ENCODE measurements at regions of chr19 and their contacts with region 1.

Region 1: DNA sequence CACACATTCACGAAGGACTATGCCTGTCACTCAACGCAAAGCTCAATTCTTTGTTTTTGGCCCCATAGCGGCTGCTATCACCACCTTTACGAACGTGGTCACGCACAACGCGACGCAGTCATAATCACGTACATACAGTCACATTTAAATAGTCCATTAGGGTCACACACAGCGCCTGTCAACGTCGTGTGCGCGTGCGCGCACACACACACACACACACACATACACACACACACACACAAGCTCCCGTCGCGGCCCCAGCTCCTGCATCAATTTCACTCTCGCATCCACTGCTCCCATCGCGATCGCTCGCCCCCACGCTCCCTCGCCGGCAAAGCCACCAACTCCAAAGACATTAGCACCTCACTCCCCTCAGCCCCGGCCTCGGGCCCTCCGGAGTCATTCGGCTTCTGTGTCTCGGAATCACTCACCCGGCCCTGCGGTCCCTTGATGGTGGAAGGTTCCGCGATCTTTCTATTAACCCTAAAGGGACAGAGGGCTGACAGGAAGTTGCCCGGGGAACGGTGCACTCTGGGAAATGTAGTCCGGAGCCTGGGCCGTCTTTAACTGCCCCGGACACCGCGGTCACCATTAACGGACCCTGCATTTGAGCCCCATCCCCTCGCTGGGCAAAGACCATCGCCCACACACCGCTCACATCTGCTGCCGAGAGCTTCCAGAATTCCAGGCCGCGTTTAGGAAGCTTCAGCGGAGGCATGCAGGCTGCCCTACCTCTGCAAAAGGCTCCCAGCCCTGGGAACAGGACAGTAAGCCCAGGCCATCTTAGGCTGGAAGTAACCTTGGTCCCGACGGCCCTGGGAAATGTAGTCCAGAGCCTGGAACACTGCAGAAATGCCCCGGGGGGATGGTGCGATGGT is at the start of gene ZNF790:
- DNase-seq: peak; percentile 92
- ATAC-seq: peak; percentile 97
- H3K4me3 Mint-ChIP-seq: no peak within 1 kb of the TSS
- H3K27ac Mint-ChIP-seq: peak within 1 kb of the TSS; percentile 72
- H3K4me1 Mint-ChIP-seq: peaks cover 2% of the 10 kb centered on the region
- H3K27me3 Mint-ChIP-seq: no peaks in the 10 kb centered on the region
- total RNA-seq, gene ZNF790: 7.1 to 8.8 TPM

Region 2: GRCh38 chr19:36605101-36605876 is 232.9 kb before region 1 on chr19 and contains the start of gene ZNF382:
- CTCF ChIA-PET with region 1: no interaction called
- POLR2A ChIA-PET with region 1: no interaction called
- intact Hi-C with region 1: loop called in 1 of 2 experiments (anchors 1 kb)
- DNase-seq: peak; percentile 94
- ATAC-seq: peak; percentile 86
- H3K4me3 Mint-ChIP-seq: peak within 1 kb of the TSS; percentile 81
- H3K27ac Mint-ChIP-seq: peak within 1 kb of the TSS; percentile 91
- H3K4me1 Mint-ChIP-seq: peaks cover 20% of the 10 kb centered on the region
- H3K27me3 Mint-ChIP-seq: no peaks in the 10 kb centered on the region
- total RNA-seq, gene ZNF382: 14.9 to 20.0 TPM

Region 3: DNA sequence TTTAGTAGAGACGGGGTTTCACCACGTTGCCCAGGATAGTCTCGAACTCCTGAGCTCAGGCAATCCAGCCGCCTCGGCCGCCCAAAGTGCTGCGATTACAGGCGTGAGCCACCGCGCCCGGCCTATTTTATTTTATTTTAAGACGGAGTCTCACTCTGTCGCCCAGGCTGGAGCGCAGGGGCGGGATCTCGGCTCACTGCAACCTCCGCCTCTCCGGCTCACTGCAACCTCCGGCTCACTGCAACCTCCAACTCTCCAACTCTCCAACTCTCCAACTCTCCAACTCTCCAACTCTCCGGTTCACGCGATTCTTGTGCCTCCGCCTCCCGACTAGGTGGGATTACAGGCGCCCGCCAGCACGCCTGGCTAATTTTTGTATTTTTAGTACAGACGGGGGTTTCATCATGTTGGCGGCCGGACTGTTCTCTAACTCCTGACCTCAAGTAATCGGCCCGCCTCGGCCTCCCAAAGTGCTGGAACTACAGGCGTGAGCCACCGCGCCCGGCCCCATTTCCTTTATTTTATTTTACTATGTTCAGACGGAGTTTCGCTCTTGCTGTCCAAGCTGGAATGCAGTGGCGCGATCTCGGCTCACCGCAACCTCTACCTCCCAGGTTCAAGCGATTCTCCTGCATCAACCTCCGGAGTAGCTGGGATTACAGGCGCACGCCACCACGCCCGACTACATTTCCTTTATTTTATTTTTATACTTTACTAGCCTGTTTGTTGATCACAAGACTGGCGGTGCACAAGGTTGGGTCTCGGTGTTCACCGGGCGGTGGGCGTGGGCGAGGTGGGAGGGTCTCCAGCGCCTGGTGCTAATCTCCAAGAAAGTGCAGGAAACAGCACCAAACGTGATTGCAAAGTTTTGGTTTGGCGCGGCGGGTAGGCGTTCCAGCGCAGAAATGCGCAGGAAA is 41.8 kb before region 1 on chr19:
- CTCF ChIA-PET with region 1: no interaction called
- POLR2A ChIA-PET with region 1: no interaction called
- intact Hi-C with region 1: loop called in 1 of 2 experiments (anchors 1 kb)
- DNase-seq: no peak
- ATAC-seq: no peak
- H3K4me3 Mint-ChIP-seq: peak overlapping the region; percentile 83
- H3K27ac Mint-ChIP-seq: peak overlapping the region; percentile 92
- H3K4me1 Mint-ChIP-seq: peaks cover 14% of the 10 kb centered on the region
- H3K27me3 Mint-ChIP-seq: peaks cover 4% of the 10 kb centered on the region

Region 4: GRCh38 chr19:36850559-36851442 is 12.7 kb after region 1 on chr19 and contains the start of gene ZNF345:
- CTCF ChIA-PET with region 1: interaction called, 19 read pairs
- POLR2A ChIA-PET with region 1: interaction called, 53 read pairs
- intact Hi-C with region 1: loop called (anchors 1 kb)
- DNase-seq: peak; percentile 91
- ATAC-seq: peak; percentile 82
- H3K4me3 Mint-ChIP-seq: no peak within 1 kb of the TSS
- H3K27ac Mint-ChIP-seq: no peak within 1 kb of the TSS
- H3K4me1 Mint-ChIP-seq: peaks cover 10% of the 10 kb centered on the region
- H3K27me3 Mint-ChIP-seq: no peaks in the 10 kb centered on the region
- total RNA-seq, gene ZNF345: 3.5 to 4.6 TPM

Region 5: GRCh38 chr19:37217855-37218591 is 379.9 kb after region 1 on chr19 and contains the start of gene ZNF383:
- CTCF ChIA-PET with region 1: no interaction called
- POLR2A ChIA-PET with region 1: no interaction called
- intact Hi-C with region 1: loop called in 1 of 2 experiments (anchors 5 kb)
- DNase-seq: peak; percentile 89
- ATAC-seq: peak; percentile 87
- H3K4me3 Mint-ChIP-seq: peak within 1 kb of the TSS; percentile 93
- H3K27ac Mint-ChIP-seq: peak within 1 kb of the TSS; percentile 99
- H3K4me1 Mint-ChIP-seq: peaks cover 24% of the 10 kb centered on the region
- H3K27me3 Mint-ChIP-seq: no peaks in the 10 kb centered on the region
- total RNA-seq, gene ZNF383: 8.5 to 9.2 TPM

Region 6: DNA sequence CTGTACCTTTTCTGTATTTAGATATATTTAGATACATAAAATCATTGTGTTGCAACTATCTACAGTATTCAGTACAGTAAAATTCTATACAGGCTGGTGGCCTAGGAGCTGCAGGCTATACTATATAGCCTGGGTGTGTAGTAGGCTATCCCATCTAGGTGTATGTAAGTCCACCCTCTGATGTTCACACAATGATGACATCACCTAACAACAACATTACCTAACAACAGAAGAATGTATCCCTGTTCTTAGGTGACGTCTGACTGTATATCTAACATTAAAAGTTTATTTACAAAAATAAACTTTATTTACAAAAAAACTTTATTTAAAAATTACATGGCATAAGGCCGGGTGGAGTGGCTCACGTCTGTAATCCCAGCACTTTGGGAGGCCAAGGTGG is 845.4 kb after region 1 on chr19:
- CTCF ChIA-PET with region 1: no interaction called
- POLR2A ChIA-PET with region 1: no interaction called
- intact Hi-C with region 1: no loop called
- DNase-seq: no peak
- ATAC-seq: no peak
- H3K4me3 Mint-ChIP-seq: no peak overlapping the region
- H3K27ac Mint-ChIP-seq: no peak overlapping the region
- H3K4me1 Mint-ChIP-seq: no peaks in the 10 kb centered on the region
- H3K27me3 Mint-ChIP-seq: no peaks in the 10 kb centered on the region